H1 (cell line): ENCODE measurements at regions of chr2 and their contacts with region 1.

Region 1: GRCh38 chr2:179422037-179422643 is 157.5 kb upstream of the SESTD1 start:
- DNase-seq: peak; percentile 53 to 81
- H3K4me3 ChIP-seq: no peak overlapping the region
- H3K27ac ChIP-seq: no peak overlapping the region
- H3K4me1 ChIP-seq: no peaks in the 10 kb centered on the region
- H3K27me3 ChIP-seq: no peaks in the 10 kb centered on the region
- CTCF ChIP-seq: peak; percentile 68 to 90 (median 79)
- EP300 ChIP-seq: no peak
- POLR2A ChIP-seq: no peak
- RAD21 ChIP-seq: peak; percentile 92 to 94

Region 2: GRCh38 chr2:179376881-179377280 is 45.3 kb before region 1 on chr2:
- CTCF ChIA-PET with region 1: no interaction called
- POLR2A ChIA-PET with region 1: no interaction called
- DNase-seq: no peak
- H3K4me3 ChIP-seq: no peak overlapping the region
- H3K27ac ChIP-seq: no peak overlapping the region
- H3K4me1 ChIP-seq: no peaks in the 10 kb centered on the region
- H3K27me3 ChIP-seq: no peaks in the 10 kb centered on the region
- CTCF ChIP-seq: no peak
- EP300 ChIP-seq: no peak
- POLR2A ChIP-seq: no peak
- RAD21 ChIP-seq: no peak

Region 3: DNA sequence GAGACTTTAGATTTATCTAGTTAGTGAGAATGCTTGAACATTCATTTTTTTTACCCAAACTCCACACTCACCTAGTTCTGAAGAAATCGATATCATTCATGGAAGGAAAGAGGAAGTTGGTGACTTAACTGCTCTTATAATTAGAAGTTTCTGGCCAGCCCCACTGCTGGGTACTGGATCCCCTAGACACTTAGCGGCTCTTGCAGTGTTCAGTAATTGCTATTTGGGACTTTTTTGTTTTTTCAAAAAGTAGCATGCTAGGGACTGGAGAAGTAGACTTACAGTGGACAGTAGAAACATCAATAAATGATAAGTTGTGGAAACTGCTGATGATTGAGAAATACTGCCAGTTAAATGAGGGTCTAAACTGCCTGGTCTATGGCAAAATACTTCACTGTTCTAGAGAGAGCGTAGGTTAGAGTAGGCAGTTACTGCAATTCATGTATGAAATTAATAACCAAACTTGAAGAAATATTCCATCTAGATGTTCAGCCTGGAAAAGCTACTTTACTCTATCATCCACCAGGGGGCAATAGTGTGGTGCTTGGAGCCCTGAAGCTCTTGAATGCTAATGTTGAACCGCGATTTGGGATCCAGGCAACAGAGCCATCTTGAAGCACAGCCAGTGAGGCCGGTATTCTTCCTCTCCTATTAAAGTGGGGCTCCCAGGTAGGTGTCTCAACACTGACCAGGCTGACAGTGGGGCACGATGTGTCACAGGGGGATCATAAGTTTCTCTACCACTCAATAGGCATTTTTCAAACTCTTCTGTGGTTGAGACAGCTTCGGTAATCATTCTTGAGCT is 11.4 kb before region 1 on chr2:
- CTCF ChIA-PET with region 1: interaction called, 39 read pairs
- POLR2A ChIA-PET with region 1: no interaction called
- DNase-seq: peak in 1 of 2 experiments; percentile 51
- H3K4me3 ChIP-seq: no peak overlapping the region
- H3K27ac ChIP-seq: no peak overlapping the region
- H3K4me1 ChIP-seq: no peaks in the 10 kb centered on the region
- H3K27me3 ChIP-seq: no peaks in the 10 kb centered on the region
- CTCF ChIP-seq: peak in 2 of 3 experiments; percentile 74 to 86; a peak in 3 of 4 replicates
- EP300 ChIP-seq: no peak
- POLR2A ChIP-seq: no peak
- RAD21 ChIP-seq: peak; percentile 82 to 84

Region 4: GRCh38 chr2:179435000-179435399 is 12.9 kb after region 1 on chr2:
- CTCF ChIA-PET with region 1: interaction called, 48 read pairs
- POLR2A ChIA-PET with region 1: no interaction called
- DNase-seq: no peak
- H3K4me3 ChIP-seq: no peak overlapping the region
- H3K27ac ChIP-seq: no peak overlapping the region
- H3K4me1 ChIP-seq: peaks cover 0 to 4% (median 0%) of the 10 kb centered on the region in 4 experiments; a peak in 1 of 7 replicates
- H3K27me3 ChIP-seq: no peaks in the 10 kb centered on the region
- CTCF ChIP-seq: no peak
- EP300 ChIP-seq: no peak
- POLR2A ChIP-seq: no peak
- RAD21 ChIP-seq: no peak

Region 5: GRCh38 chr2:179440642-179441251 is 18.6 kb after region 1 on chr2:
- CTCF ChIA-PET with region 1: interaction called, 48 read pairs
- POLR2A ChIA-PET with region 1: no interaction called
- DNase-seq: no peak
- H3K4me3 ChIP-seq: no peak overlapping the region
- H3K27ac ChIP-seq: no peak overlapping the region
- H3K4me1 ChIP-seq: peaks cover 0 to 17% (median 7%) of the 10 kb centered on the region in 4 experiments; a peak in 6 of 7 replicates
- H3K27me3 ChIP-seq: no peaks in the 10 kb centered on the region
- CTCF ChIP-seq: peak in 2 of 3 experiments; percentile 35 to 58; a peak in 2 of 4 replicates
- EP300 ChIP-seq: no peak
- POLR2A ChIP-seq: no peak
- RAD21 ChIP-seq: peak; percentile 47

Region 6: GRCh38 chr2:179745635-179746256 is 323.6 kb after region 1 on chr2:
- CTCF ChIA-PET with region 1: interaction called, 24 read pairs
- POLR2A ChIA-PET with region 1: no interaction called
- DNase-seq: no peak
- H3K4me3 ChIP-seq: no peak overlapping the region
- H3K27ac ChIP-seq: no peak overlapping the region
- H3K4me1 ChIP-seq: no peaks in the 10 kb centered on the region
- H3K27me3 ChIP-seq: no peaks in the 10 kb centered on the region
- CTCF ChIP-seq: no peak
- EP300 ChIP-seq: no peak
- POLR2A ChIP-seq: no peak
- RAD21 ChIP-seq: no peak

Region 7: GRCh38 chr2:179751163-179751809 is 329.1 kb after region 1 on chr2:
- CTCF ChIA-PET with region 1: interaction called, 24 read pairs
- POLR2A ChIA-PET with region 1: no interaction called
- DNase-seq: no peak
- H3K4me3 ChIP-seq: no peak overlapping the region
- H3K27ac ChIP-seq: no peak overlapping the region
- H3K4me1 ChIP-seq: no peaks in the 10 kb centered on the region
- H3K27me3 ChIP-seq: no peaks in the 10 kb centered on the region
- CTCF ChIP-seq: peak in 2 of 3 experiments; percentile 29 to 46; a peak in 2 of 4 replicates
- EP300 ChIP-seq: no peak
- POLR2A ChIP-seq: no peak
- RAD21 ChIP-seq: peak; percentile 71 to 85